ENCODE measurements at regions of chr7 and their contacts with region 1.

Region 1: GRCh38 chr7:106056513-106057203 is 55.5 kb downstream of the SYPL1 start:
- DNase-seq: peak; percentile 77
- ATAC-seq: peak; percentile 93
- H3K4me3 ChIP-seq: no peak overlapping the region
- H3K27ac ChIP-seq: no peak overlapping the region
- H3K4me1 ChIP-seq: peaks cover 7% of the 10 kb centered on the region
- H3K27me3 ChIP-seq: no peaks in the 10 kb centered on the region
- CTCF ChIP-seq: peak; percentile 84

Region 2: DNA sequence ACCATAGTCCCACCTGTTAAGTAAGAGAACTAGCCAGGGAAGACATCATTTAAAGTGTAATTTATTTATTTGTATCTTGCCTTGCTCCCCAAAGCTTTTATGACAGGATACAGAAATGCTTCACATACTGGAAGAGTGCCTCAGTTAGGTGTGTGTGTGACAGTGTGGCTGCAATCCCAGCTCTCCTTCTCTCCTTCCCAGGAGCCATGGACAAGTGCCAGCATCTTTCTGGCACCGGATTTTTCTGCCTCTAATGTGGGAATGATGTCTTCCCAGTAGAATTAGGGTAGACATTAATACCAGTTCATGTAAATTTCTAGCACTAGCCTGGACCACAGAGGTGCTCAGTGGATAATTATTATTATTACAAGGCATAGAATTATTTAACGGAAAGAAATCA is 150.0 kb before region 1 on chr7:
- intact Hi-C with region 1: no loop called
- DNase-seq: no peak
- ATAC-seq: no peak
- H3K4me3 ChIP-seq: no peak overlapping the region
- H3K27ac ChIP-seq: no peak overlapping the region
- H3K4me1 ChIP-seq: no peaks in the 10 kb centered on the region
- H3K27me3 ChIP-seq: no peaks in the 10 kb centered on the region
- CTCF ChIP-seq: no peak

Region 3: GRCh38 chr7:106153891-106154449 is 97.3 kb after region 1 on chr7:
- intact Hi-C with region 1: loop called (anchors 5 kb)
- DNase-seq: peak; percentile 88
- ATAC-seq: peak; percentile 99
- H3K4me3 ChIP-seq: no peak overlapping the region
- H3K27ac ChIP-seq: no peak overlapping the region
- H3K4me1 ChIP-seq: peaks cover 2% of the 10 kb centered on the region
- H3K27me3 ChIP-seq: no peaks in the 10 kb centered on the region
- CTCF ChIP-seq: peak; percentile 95